Activated naive CD4-positive, alpha-beta T cell treated with anti-CD3 and anti-CD28 coated beads, Interleukin-2, amount 10 ng/mL, durations not matched to agents 7 days and 5 days (primary cell): ENCODE measurements at regions of chr22 and their contacts with region 1.

Region 1: GRCh38 chr22:36775964-36776669 is at the start of gene IFT27:
- DNase-seq: peak; percentile 99
- H3K4me3 Mint-ChIP-seq: peak within 1 kb of the TSS; percentile 81
- H3K27ac Mint-ChIP-seq: peak within 1 kb of the TSS; percentile 90
- H3K4me1 Mint-ChIP-seq: peaks cover 26% of the 10 kb centered on the region
- H3K27me3 Mint-ChIP-seq: no peaks in the 10 kb centered on the region

Region 2: GRCh38 chr22:36757668-36758211 is 18.4 kb before region 1 on chr22:
- CTCF ChIA-PET with region 1: interaction called, 16 read pairs
- DNase-seq: peak; percentile 89
- H3K4me3 Mint-ChIP-seq: no peak overlapping the region
- H3K27ac Mint-ChIP-seq: no peak overlapping the region
- H3K4me1 Mint-ChIP-seq: no peaks in the 10 kb centered on the region
- H3K27me3 Mint-ChIP-seq: peaks cover 26% of the 10 kb centered on the region

Region 3: DNA sequence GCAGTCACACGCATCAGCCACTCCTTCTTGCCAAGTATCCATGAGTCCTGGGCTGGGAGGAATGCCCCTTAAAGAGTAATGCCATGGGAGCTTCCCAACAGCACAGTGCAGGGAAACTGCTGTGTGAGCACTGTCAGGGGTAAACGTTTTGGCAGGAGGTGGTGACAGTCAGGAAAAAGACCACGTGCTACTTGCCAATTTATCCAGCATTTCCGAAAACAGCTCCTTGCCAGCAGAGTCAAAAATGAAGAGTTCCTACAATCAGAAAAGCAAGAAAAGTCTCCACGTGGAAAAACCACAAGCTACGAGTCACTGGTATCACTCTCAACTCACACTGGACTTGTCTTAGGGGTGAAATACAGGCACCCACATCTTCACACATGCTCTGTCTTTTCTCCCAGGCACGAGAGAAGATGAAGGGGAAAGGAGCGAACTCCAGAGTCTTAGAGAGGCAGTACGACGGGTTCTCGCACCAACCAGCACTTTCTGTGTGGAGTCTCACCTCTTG is 10.1 kb before region 1 on chr22:
- CTCF ChIA-PET with region 1: interaction called, 12 read pairs
- DNase-seq: no peak
- H3K4me3 Mint-ChIP-seq: no peak overlapping the region
- H3K27ac Mint-ChIP-seq: no peak overlapping the region
- H3K4me1 Mint-ChIP-seq: no peaks in the 10 kb centered on the region
- H3K27me3 Mint-ChIP-seq: no peaks in the 10 kb centered on the region